Activated T-helper 2 cell treated with anti-CD3 and anti-CD28 coated beads, Interferon-gamma antibody, Interleukin-2, Interleukin-4, amounts not matched to agents 10 μg/mL and 5 μg/mL and 100 μg/mL, durations not matched to agents 14 hours and 24 hours and 36 hours (primary cell): ENCODE measurements at regions of chr7 and their contacts with region 1.

Region 1: DNA sequence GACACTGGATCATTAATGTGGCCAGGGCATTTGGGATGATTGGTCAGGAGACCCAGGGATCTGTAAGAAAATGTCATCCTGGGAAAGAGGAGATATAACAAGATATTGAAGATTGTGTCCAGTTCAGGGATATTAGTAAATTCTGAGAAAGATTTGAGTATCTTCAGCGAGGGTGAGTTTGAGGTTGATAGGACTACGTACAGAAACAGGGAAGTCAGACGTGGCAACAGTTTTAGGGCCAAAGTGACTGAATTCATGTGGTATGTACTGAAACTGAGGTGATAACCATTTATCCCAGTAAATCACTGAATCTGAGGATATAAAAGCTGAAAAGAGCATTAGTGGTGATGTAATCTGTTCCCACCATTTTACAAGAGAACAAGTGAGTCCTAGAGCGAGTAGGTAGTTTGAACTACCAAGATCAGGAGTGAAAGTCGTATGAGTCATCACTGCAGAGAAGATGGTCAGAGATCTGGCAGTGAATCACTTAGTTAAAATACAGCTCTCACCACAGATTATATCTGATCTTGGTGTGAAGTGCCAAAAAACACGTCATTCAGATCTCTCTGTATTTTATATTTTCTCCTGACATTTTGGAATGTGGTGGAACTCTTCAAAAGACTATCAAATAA is 220.5 kb downstream of the CDK14 start:
- DNase-seq: no peak
- H3K4me3 Mint-ChIP-seq: no peak overlapping the region
- H3K27ac Mint-ChIP-seq: no peak overlapping the region
- H3K4me1 Mint-ChIP-seq: peaks cover 14% of the 10 kb centered on the region
- H3K27me3 Mint-ChIP-seq: peaks cover 6% of the 10 kb centered on the region

Region 2: DNA sequence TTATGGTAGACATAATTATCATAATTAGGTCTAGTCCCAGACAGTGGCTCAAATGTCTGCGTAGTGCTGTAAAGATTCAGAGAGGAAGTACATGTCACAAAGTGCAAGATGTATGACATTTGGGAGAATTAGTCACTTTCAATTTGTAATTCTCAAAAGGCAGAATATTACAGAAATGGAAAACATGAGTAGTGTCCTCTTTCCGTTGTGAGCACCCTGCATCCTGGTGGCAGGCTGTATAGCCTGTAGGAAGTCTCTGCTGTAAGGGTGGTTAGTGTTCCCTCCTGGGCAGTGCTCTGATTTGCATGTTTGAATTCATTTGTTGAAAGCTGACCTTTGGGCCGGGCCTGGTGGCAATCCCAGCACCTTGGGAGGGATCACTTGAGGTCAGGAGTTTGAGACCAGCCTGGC is 203.5 kb before region 1 on chr7:
- intact Hi-C with region 1: loop called (anchors 2 kb)
- DNase-seq: no peak
- H3K4me3 Mint-ChIP-seq: no peak overlapping the region
- H3K27ac Mint-ChIP-seq: peak overlapping the region; percentile 87
- H3K4me1 Mint-ChIP-seq: peaks cover 11% of the 10 kb centered on the region
- H3K27me3 Mint-ChIP-seq: no peaks in the 10 kb centered on the region

Region 3: GRCh38 chr7:90736968-90737939 is 79.4 kb before region 1 on chr7:
- intact Hi-C with region 1: loop called (anchors 5 kb)
- DNase-seq: no peak
- H3K4me3 Mint-ChIP-seq: no peak overlapping the region
- H3K27ac Mint-ChIP-seq: no peak overlapping the region
- H3K4me1 Mint-ChIP-seq: peaks cover 5% of the 10 kb centered on the region
- H3K27me3 Mint-ChIP-seq: peaks cover 1% of the 10 kb centered on the region